ENCODE measurements at regions of chr16 and their contacts with region 1.

Region 1: GRCh38 chr16:68575082-68575481 is 36.0 kb downstream of the ZFP90 start:
- DNase-seq: no peak
- H3K4me3 Mint-ChIP-seq: no peak overlapping the region
- H3K27ac Mint-ChIP-seq: no peak overlapping the region
- H3K4me1 Mint-ChIP-seq: no peaks in the 10 kb centered on the region
- H3K27me3 Mint-ChIP-seq: no peaks in the 10 kb centered on the region

Region 2: GRCh38 chr16:68538880-68539701 is 36.0 kb before region 1 on chr16 and contains the start of gene ZFP90:
- CTCF ChIA-PET with region 1: interaction called, 3 read pairs
- intact Hi-C with region 1: loop called (anchors 5 kb)
- DNase-seq: peak; percentile 85
- H3K4me3 Mint-ChIP-seq: peak within 1 kb of the TSS; percentile 91
- H3K27ac Mint-ChIP-seq: peak within 1 kb of the TSS; percentile 96
- H3K4me1 Mint-ChIP-seq: peaks cover 19% of the 10 kb centered on the region
- H3K27me3 Mint-ChIP-seq: no peaks in the 10 kb centered on the region
- total RNA-seq, gene ZFP90: 27.5 to 30.2 TPM

Region 3: GRCh38 chr16:68644715-68645493 is 69.8 kb after region 1 on chr16 and contains the start of gene CDH3:
- CTCF ChIA-PET with region 1: no interaction called
- intact Hi-C with region 1: no loop called
- DNase-seq: peak; percentile 46
- H3K4me3 Mint-ChIP-seq: peak within 1 kb of the TSS; percentile 69
- H3K27ac Mint-ChIP-seq: no peak within 1 kb of the TSS
- H3K4me1 Mint-ChIP-seq: peaks cover 31% of the 10 kb centered on the region
- H3K27me3 Mint-ChIP-seq: peaks cover 66% of the 10 kb centered on the region
- total RNA-seq, gene CDH3: 20.1 to 23.3 TPM

Region 4: DNA sequence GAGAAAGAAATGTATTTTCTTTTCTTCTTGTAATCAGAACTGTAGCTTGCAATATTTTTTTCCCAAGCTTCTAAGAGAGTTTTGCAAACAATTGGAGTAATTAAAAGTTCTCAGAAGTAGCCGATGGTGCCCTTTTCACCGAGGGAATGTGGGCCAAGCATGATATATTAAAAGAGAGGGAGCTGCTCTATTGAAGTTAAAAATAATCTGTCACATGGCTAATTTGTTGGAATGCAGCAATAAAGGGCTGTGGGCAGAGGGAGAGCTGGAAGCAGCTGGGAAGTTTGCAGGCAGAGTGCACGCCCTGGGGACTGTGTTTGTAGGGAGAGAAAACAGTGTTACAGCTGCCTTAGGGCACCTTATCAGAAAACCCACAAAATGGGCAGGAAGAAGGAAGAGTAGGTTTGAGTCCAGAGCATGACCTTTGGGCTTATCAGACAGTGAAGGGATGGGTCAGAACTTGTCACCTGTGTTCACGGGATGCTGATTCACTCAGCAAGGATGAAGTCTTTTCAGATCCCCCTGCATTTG is 829.3 kb after region 1 on chr16:
- CTCF ChIA-PET with region 1: no interaction called
- intact Hi-C with region 1: no loop called
- DNase-seq: no peak
- H3K4me3 Mint-ChIP-seq: no peak overlapping the region
- H3K27ac Mint-ChIP-seq: no peak overlapping the region
- H3K4me1 Mint-ChIP-seq: peaks cover 9% of the 10 kb centered on the region
- H3K27me3 Mint-ChIP-seq: no peaks in the 10 kb centered on the region

Measured in activated naive CD4-positive, alpha-beta T cell treated with anti-CD3 and anti-CD28 coated beads for 36 hours (primary cell).